Vagina (tissue), 2 donors: ENCODE measurements at regions of chr3 and their contacts with region 1.

Region 1: DNA sequence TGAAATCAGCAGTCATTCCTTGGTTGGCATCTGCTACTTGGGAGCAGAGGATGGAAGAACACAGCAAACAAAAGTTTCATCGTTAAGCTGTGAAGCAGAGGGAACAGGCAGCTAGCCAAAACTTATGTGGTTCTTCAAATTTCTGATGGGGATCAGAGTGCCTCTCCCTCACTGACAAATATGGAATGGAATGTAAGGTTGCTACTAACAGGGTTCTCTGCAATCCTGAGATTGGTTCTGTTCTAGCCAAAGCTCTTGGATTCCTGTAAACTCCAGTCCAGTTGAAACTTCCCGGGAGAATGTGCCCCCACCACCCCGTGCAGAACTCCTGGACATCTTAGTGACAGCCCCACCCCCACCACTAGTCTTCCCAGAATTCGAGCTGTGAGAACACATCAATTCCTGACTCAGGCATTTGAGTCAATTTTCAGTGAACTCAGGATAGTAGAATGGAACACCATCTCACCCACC is 55.9 kb upstream of the PHLDB2 start:
- DNase-seq: peak in 1 of 2 donors; percentile 94
- H3K4me3 ChIP-seq: no peak overlapping the region
- H3K27ac ChIP-seq: peak overlapping the region; percentile 70
- H3K4me1 ChIP-seq: peaks cover 36% of the 10 kb centered on the region
- H3K27me3 ChIP-seq: no peaks in the 10 kb centered on the region
- CTCF ChIP-seq: no peak
- POLR2A ChIP-seq: no peak

Region 2: DNA sequence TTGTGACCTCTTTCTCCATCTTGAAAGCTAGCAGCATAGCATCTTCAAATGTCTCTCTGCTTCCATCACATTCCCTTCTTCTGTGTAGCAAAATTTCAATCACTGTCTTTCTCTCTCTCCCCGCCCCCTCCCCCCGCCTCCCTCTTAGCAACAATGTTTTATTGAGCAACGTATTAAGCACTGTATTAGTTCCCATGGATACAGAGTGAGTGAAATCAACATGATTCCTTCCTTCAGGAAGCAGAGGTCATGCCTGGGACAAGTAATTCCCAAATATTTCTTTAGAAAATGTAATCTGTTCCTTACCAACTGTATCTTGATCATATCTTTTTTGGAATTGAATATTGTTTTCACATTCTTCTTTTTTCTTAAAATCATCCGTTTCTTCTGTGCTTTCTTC is 1105.2 kb before region 1 on chr3:
- intact Hi-C with region 1: no loop called
- DNase-seq: no peak
- H3K4me3 ChIP-seq: no peak overlapping the region
- H3K27ac ChIP-seq: no peak overlapping the region
- H3K4me1 ChIP-seq: no peaks in the 10 kb centered on the region
- H3K27me3 ChIP-seq: no peaks in the 10 kb centered on the region
- CTCF ChIP-seq: no peak
- POLR2A ChIP-seq: no peak

Region 3: GRCh38 chr3:111737706-111738086 is 65.5 kb before region 1 on chr3:
- intact Hi-C with region 1: loop called (anchors 10 kb)
- DNase-seq: no peak
- H3K4me3 ChIP-seq: no peak overlapping the region
- H3K27ac ChIP-seq: peak overlapping the region; percentile 64
- H3K4me1 ChIP-seq: peaks cover 33% of the 10 kb centered on the region
- H3K27me3 ChIP-seq: no peaks in the 10 kb centered on the region
- CTCF ChIP-seq: no peak
- POLR2A ChIP-seq: no peak